ENCODE measurements at regions of chr17 and their contacts with region 1.

Region 1: DNA sequence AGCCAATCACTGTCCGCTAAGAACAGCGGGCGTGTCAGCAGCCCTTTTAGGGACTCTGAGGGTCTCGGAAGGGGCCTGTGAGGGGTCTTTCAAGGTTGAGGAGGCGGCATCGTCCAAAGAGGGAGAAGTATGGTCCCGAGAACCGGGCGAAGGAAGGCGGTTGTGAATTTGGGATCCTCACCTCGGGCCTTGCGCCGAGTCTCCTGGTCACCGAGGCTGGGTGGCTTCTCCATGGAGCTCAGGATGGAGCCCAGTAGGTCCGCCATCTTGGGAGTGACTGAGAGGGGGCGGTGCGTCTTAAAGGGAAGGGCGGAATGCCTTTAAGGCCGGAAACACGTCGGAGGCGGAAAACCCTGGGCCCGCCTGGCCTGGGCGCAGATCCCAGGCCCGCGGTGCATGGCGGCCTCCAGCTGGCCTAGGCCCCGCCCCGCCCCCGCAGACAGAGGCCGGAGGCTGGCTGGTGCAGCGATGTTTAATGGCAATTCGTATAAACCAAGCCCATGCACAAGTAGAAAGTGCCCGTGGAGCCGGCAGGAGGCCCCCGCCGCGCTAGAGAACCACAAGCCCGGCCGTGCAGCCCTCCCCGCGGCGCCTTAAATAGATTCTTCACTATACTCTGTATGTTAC is at the start of gene SPAG7:
- DNase-seq: peak; percentile 96
- ATAC-seq: peak; percentile 54
- H3K4me3 Mint-ChIP-seq: no peak within 1 kb of the TSS
- H3K27ac Mint-ChIP-seq: no peak within 1 kb of the TSS
- H3K4me1 Mint-ChIP-seq: peaks cover 40% of the 10 kb centered on the region
- H3K27me3 Mint-ChIP-seq: no peaks in the 10 kb centered on the region
- total RNA-seq, gene SPAG7: 61.4 to 69.4 TPM

Region 2: GRCh38 chr17:4908301-4908700 is 59.4 kb before region 1 on chr17:
- CTCF ChIA-PET with region 1: interaction called, 7 read pairs
- POLR2A ChIA-PET with region 1: no interaction called
- intact Hi-C with region 1: loop called (anchors 1 to 2 kb)
- DNase-seq: peak; percentile 38
- ATAC-seq: peak; percentile 27
- H3K4me3 Mint-ChIP-seq: no peak overlapping the region
- H3K27ac Mint-ChIP-seq: no peak overlapping the region
- H3K4me1 Mint-ChIP-seq: peaks cover 4% of the 10 kb centered on the region
- H3K27me3 Mint-ChIP-seq: peaks cover 3% of the 10 kb centered on the region

Region 3: DNA sequence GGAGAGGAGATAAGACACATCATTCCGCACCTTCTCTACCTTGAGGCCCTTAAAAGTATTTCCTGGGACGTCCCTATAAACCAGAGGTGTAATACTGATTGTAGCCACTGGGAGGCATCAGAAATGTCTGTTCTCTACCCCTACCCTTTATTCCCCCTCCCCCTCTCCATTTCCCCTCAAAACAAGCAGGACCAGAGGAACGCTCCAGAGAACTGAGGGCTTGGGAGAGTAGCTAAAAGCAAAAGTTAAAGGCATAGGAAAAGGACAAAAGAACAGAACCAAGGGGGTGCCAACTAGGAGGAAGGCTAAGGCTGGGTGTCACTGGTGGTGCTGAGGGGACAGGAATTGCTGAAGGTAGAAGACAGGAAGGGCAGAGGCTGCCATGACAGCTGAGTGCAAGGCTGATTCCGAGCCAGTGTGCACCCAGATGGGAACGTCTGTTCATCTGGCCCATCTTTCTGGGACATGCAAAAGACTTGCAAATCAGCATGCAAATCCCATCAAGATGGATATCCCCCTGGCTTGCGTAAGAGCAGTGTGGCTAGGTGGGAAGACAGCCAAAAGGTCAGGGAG is 13.1 kb after region 1 on chr17:
- CTCF ChIA-PET with region 1: interaction called, 21 read pairs
- POLR2A ChIA-PET with region 1: interaction called, 3 read pairs
- intact Hi-C with region 1: loop called in 1 of 2 experiments (anchors 2 kb)
- DNase-seq: peak; percentile 57
- ATAC-seq: peak; percentile 94
- H3K4me3 Mint-ChIP-seq: no peak overlapping the region
- H3K27ac Mint-ChIP-seq: peak overlapping the region; percentile 69
- H3K4me1 Mint-ChIP-seq: peaks cover 23% of the 10 kb centered on the region
- H3K27me3 Mint-ChIP-seq: no peaks in the 10 kb centered on the region

Region 4: GRCh38 chr17:5019475-5019956 is 51.9 kb after region 1 on chr17:
- CTCF ChIA-PET with region 1: interaction called, 3 read pairs
- POLR2A ChIA-PET with region 1: no interaction called
- intact Hi-C with region 1: loop called in 1 of 2 experiments (anchors 1 kb)
- DNase-seq: peak; percentile 67
- ATAC-seq: peak; percentile 93
- H3K4me3 Mint-ChIP-seq: no peak overlapping the region
- H3K27ac Mint-ChIP-seq: peak overlapping the region; percentile 56
- H3K4me1 Mint-ChIP-seq: peaks cover 11% of the 10 kb centered on the region
- H3K27me3 Mint-ChIP-seq: no peaks in the 10 kb centered on the region

Region 5: GRCh38 chr17:5065227-5065744 is 97.6 kb after region 1 on chr17:
- CTCF ChIA-PET with region 1: interaction called, 4 read pairs
- POLR2A ChIA-PET with region 1: no interaction called
- intact Hi-C with region 1: loop called in 1 of 2 experiments (anchors 1 kb)
- DNase-seq: no peak
- ATAC-seq: no peak
- H3K4me3 Mint-ChIP-seq: no peak overlapping the region
- H3K27ac Mint-ChIP-seq: no peak overlapping the region
- H3K4me1 Mint-ChIP-seq: peaks cover 3% of the 10 kb centered on the region
- H3K27me3 Mint-ChIP-seq: no peaks in the 10 kb centered on the region

Region 6: GRCh38 chr17:5191541-5192417 is 224.1 kb after region 1 on chr17 and contains the start of gene ZNF594:
- CTCF ChIA-PET with region 1: interaction called, 3 read pairs
- POLR2A ChIA-PET with region 1: no interaction called
- intact Hi-C with region 1: loop called in 1 of 2 experiments (anchors 5 kb)
- DNase-seq: peak; percentile 99
- ATAC-seq: peak; percentile 100
- H3K4me3 Mint-ChIP-seq: peak within 1 kb of the TSS; percentile 94
- H3K27ac Mint-ChIP-seq: peak within 1 kb of the TSS; percentile 88
- H3K4me1 Mint-ChIP-seq: peaks cover 27% of the 10 kb centered on the region
- H3K27me3 Mint-ChIP-seq: no peaks in the 10 kb centered on the region
- total RNA-seq, gene ZNF594: 8.0 to 8.4 TPM

Region 7: GRCh38 chr17:5500589-5501391 is 533.1 kb after region 1 on chr17:
- CTCF ChIA-PET with region 1: no interaction called
- POLR2A ChIA-PET with region 1: no interaction called
- intact Hi-C with region 1: no loop called
- DNase-seq: peak; percentile 87
- ATAC-seq: peak; percentile 98
- H3K4me3 Mint-ChIP-seq: peak overlapping the region; percentile 79
- H3K27ac Mint-ChIP-seq: peak overlapping the region; percentile 72
- H3K4me1 Mint-ChIP-seq: peaks cover 3% of the 10 kb centered on the region
- H3K27me3 Mint-ChIP-seq: no peaks in the 10 kb centered on the region